Caco-2 (cell line): ENCODE measurements at regions of chr17 and their contacts with region 1.

Region 1: GRCh38 chr17:74176546-74177001 is 26.9 kb upstream of the RPL38 start:
- DNase-seq: peak; percentile 71 to 78
- H3K4me3 ChIP-seq: no peak overlapping the region
- H3K4me3 Mint-ChIP-seq: no peak overlapping the region
- H3K27ac Mint-ChIP-seq: no peak overlapping the region
- H3K4me1 ChIP-seq: no peaks in the 10 kb centered on the region
- H3K4me1 Mint-ChIP-seq: no peaks in the 10 kb centered on the region
- H3K27me3 ChIP-seq: no peaks in the 10 kb centered on the region; the same call in none of the 2 replicates
- H3K27me3 Mint-ChIP-seq: peaks cover 31% of the 10 kb centered on the region
- CTCF ChIP-seq: peak; percentile 94 to 98

Region 2: GRCh38 chr17:73429440-73430164 is 747.0 kb before region 1 on chr17:
- CTCF ChIA-PET with region 1: no interaction called
- POLR2A ChIA-PET with region 1: no interaction called
- intact Hi-C with region 1: loop called (anchors 1 kb)
- DNase-seq: peak; percentile 78 to 85
- H3K4me3 ChIP-seq: no peak overlapping the region
- H3K4me3 Mint-ChIP-seq: no peak overlapping the region
- H3K27ac Mint-ChIP-seq: no peak overlapping the region
- H3K4me1 ChIP-seq: no peaks in the 10 kb centered on the region
- H3K4me1 Mint-ChIP-seq: no peaks in the 10 kb centered on the region
- H3K27me3 ChIP-seq: no peaks in the 10 kb centered on the region; the same call in 1 of the 2 replicates
- H3K27me3 Mint-ChIP-seq: peaks cover 9% of the 10 kb centered on the region
- CTCF ChIP-seq: peak; percentile 93 to 97

Region 3: DNA sequence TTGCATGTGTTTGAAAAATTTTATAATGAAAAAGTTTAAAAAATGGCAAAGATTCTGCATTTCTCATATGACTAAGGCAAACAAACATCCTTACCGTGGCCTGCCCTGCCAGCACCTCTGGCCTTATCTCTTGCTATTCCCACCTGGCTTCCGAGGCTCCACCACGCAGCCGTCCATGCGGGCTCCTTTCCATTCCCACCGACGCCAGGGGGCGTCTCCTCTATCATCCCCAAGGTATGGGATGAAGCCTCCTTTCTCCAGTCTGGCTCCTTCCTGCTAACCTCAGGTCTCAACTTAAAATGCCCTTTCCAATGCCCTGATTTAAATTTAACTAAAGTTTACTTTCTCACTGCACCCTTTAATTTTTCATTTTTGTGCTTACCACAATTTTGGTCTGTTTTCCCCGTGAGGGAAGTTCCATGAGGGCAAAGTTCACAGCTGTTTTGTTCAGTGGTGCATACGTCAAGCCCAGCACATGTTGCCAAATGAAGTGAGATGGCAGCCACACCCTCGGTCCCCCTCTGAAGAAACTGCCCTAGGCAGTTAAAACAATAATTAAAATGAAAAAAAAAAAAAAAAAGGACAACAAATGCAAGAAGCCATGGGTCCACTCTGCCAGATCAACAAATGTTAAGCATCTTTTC is 519.0 kb before region 1 on chr17:
- CTCF ChIA-PET with region 1: no interaction called
- POLR2A ChIA-PET with region 1: no interaction called
- intact Hi-C with region 1: loop called (anchors 1 kb)
- DNase-seq: peak; percentile 68 to 76
- H3K4me3 ChIP-seq: no peak overlapping the region
- H3K4me3 Mint-ChIP-seq: no peak overlapping the region
- H3K27ac Mint-ChIP-seq: no peak overlapping the region
- H3K4me1 ChIP-seq: no peaks in the 10 kb centered on the region
- H3K4me1 Mint-ChIP-seq: no peaks in the 10 kb centered on the region
- H3K27me3 ChIP-seq: no peaks in the 10 kb centered on the region
- H3K27me3 Mint-ChIP-seq: peaks cover 11% of the 10 kb centered on the region
- CTCF ChIP-seq: peak; percentile 67 to 68

Region 4: DNA sequence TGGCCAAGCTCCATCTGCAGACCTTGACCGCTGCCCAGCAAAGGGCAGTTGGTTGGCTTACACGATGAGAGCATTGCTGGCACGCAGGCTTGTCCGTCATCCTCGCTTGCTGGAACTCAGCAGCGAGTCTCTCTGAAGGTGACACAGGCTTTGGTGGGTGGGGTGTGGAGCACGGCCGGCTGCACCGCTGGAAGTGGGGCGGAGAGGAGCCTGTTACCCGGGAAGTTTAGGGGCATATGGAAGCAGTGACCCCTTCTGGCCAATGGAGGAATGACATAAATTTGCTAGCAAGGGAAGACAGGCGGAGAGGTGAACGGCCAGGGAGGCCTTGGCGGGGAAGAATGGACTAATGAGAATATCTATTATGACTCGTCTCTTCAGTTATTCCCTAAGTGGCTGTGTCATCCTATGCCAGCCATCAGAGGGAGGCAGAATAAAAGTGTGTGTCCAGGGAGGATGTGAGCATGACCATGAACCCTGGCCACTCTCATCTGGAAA is 466.4 kb before region 1 on chr17:
- CTCF ChIA-PET with region 1: no interaction called
- POLR2A ChIA-PET with region 1: no interaction called
- intact Hi-C with region 1: loop called (anchors 10 kb)
- DNase-seq: peak in 1 of 2 experiments; percentile 67
- H3K4me3 ChIP-seq: no peak overlapping the region
- H3K4me3 Mint-ChIP-seq: no peak overlapping the region
- H3K27ac Mint-ChIP-seq: no peak overlapping the region
- H3K4me1 ChIP-seq: no peaks in the 10 kb centered on the region
- H3K4me1 Mint-ChIP-seq: no peaks in the 10 kb centered on the region
- H3K27me3 ChIP-seq: peaks cover 2% of the 10 kb centered on the region; the same call in 1 of the 2 replicates
- H3K27me3 Mint-ChIP-seq: peaks cover 11% of the 10 kb centered on the region
- CTCF ChIP-seq: peak; percentile 71 to 77

Region 5: GRCh38 chr17:74064378-74064777 is 112.2 kb before region 1 on chr17:
- CTCF ChIA-PET with region 1: no interaction called
- POLR2A ChIA-PET with region 1: no interaction called
- intact Hi-C with region 1: loop called (anchors 1 kb)
- DNase-seq: no peak
- H3K4me3 ChIP-seq: no peak overlapping the region
- H3K4me3 Mint-ChIP-seq: no peak overlapping the region
- H3K27ac Mint-ChIP-seq: no peak overlapping the region
- H3K4me1 ChIP-seq: no peaks in the 10 kb centered on the region
- H3K4me1 Mint-ChIP-seq: no peaks in the 10 kb centered on the region
- H3K27me3 ChIP-seq: no peaks in the 10 kb centered on the region; the same call in 1 of the 2 replicates
- H3K27me3 Mint-ChIP-seq: peaks cover 3% of the 10 kb centered on the region
- CTCF ChIP-seq: no peak

Region 6: DNA sequence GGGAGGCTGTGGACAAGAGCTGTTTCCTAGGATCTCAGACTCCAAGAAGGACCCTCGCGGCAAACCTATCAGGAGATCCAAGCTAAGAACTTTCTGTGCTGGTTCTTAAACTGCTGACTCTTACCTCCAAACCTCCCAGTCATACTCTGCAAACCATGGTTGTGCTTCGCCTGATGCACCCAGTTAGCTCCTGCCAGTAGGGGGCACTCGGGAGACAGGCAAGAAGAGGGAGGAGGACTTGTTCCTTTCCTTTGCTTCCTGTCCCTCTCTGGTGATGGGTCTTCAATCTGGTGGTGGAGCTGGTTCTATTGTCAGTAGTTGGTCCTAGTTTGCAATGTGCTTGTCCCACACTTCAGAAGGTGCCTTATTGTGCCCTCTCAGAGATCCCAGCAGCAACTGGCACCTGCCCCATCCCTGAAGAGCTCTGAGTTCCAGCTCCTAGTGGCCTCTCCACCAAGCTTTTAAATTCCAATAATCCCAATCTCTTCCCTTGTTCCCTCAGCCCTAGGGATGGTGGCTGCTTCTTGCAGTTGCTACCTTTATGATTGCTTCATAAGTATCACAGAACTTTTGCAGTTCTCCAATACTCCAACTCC is 86.6 kb before region 1 on chr17:
- CTCF ChIA-PET with region 1: interaction called, 7 read pairs
- POLR2A ChIA-PET with region 1: no interaction called
- intact Hi-C with region 1: loop called (anchors 2 kb)
- DNase-seq: peak; percentile 51 to 52
- H3K4me3 ChIP-seq: no peak overlapping the region
- H3K4me3 Mint-ChIP-seq: no peak overlapping the region
- H3K27ac Mint-ChIP-seq: no peak overlapping the region
- H3K4me1 ChIP-seq: no peaks in the 10 kb centered on the region
- H3K4me1 Mint-ChIP-seq: no peaks in the 10 kb centered on the region
- H3K27me3 ChIP-seq: no peaks in the 10 kb centered on the region
- H3K27me3 Mint-ChIP-seq: peaks cover 22% of the 10 kb centered on the region
- CTCF ChIP-seq: peak; percentile 44 to 46